ENCODE measurements at regions of chr18 and their contacts with region 1.

Region 1: GRCh38 chr18:2920546-2921343 is 73.9 kb downstream of the EMILIN2 start:
- DNase-seq: no peak
- ATAC-seq: no peak

Region 2: DNA sequence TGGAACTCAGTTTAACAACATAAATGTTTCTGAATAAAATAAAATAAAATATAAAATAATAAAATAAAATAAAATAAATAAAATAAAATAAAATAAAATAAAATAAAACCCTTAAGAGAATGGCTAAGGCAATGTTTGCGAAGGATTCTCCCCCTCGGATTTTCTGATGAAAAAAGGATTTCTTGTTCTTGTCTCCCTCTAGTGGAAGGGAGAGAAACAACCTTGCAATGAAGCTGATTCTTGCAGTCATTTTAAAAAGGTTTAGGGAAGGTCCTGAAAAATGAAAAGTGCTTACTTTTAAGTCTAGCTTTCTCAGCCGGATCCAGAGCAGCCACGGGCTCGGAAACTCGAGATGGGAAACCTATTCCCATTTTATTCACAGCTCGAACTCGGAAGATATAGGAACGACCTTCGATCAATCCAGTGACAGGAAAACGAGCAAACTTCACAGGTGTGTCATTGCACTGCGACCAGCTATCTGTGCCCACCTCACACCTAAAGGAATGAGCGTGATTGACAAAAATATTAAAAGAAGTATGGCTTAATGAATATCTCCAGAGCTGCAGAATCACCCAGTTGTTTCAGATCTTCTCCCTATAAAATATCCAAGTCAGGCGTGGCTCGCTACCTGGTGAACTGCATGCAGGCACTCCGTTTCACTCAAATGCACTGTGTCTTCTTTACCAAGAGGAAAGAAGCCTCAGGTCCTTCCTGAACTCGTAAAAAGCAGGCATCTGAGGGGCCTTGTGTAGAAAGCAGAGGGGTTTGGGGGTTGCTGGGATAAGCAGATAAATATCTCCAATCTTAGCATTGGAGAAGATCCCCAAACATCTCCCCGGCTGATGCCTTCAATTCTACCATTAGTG is 230.9 kb after region 1 on chr18:
- intact Hi-C with region 1: no loop called
- DNase-seq: peak in 1 of 2 donors; percentile 15
- ATAC-seq: peak; percentile 63

Region 3: GRCh38 chr18:3230401-3231334 is 309.9 kb after region 1 on chr18:
- intact Hi-C with region 1: loop called in 1 of 2 experiments (anchors 10 kb)
- DNase-seq: peak in 1 of 2 donors; percentile 32
- ATAC-seq: peak; percentile 60